ENCODE measurements at regions of chr15 and their contacts with region 1.

Region 1: GRCh38 chr15:74540761-74541493 is at the start of gene ARID3B:
- DNase-seq: peak; percentile 94
- H3K4me3 Mint-ChIP-seq: peak within 1 kb of the TSS; percentile 94
- H3K27ac Mint-ChIP-seq: peak within 1 kb of the TSS; percentile 98
- H3K4me1 Mint-ChIP-seq: peaks cover 46% of the 10 kb centered on the region
- H3K27me3 Mint-ChIP-seq: no peaks in the 10 kb centered on the region
- total RNA-seq, gene ARID3B: 35.6 and 41.2 TPM in 2 replicates

Region 2: DNA sequence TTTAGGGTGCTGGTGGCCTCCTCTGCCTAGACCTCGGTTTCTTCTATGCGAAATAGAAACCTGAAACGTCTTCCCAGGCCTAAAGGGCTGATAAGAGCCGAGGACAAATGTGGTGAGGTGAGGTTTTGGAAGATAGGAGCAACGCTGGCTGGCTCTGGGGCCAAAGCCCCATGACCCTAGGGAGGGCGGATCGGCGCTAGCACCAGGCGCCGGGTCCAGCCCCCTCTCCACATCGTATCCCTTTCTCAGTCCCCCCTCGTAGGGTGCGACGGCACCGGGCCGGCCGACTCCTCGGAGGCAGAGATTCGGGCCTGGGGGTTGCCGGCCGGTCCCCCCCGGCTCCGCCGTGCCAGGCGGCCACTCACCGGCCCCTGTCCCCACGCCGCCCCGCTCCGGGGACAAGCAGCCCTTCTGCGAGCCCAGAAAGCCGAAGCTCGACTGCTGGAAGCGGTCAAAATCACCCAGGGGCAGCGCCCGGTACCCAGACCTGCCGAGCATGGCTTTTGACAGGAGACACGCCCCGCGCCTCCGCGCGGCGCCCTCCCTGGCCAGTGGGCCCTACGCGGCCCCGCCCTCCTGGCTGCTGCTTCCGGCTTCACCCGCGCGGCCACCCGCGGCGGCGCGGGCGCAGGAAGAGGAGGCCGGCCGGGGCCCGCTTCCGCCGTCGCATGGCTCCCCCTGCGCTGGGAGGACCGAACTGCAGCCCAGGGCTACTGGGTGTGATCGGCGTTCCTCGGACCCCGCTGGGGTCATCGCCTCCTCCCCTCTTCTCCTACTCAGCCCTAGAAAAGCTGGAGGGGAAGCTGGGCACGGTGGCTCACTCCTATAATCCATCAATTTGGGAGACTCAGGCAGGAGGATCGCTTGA is 549.0 kb before region 1 on chr15 and contains the start of gene STOML1:
- intact Hi-C with region 1: loop called (anchors 2 kb)
- DNase-seq: peak; percentile 93
- H3K4me3 Mint-ChIP-seq: peak within 1 kb of the TSS; percentile 81
- H3K27ac Mint-ChIP-seq: peak within 1 kb of the TSS; percentile 85
- H3K4me1 Mint-ChIP-seq: peaks cover 35% of the 10 kb centered on the region
- H3K27me3 Mint-ChIP-seq: no peaks in the 10 kb centered on the region
- total RNA-seq, gene STOML1: 8.6 and 9.2 TPM in 2 replicates

Region 3: GRCh38 chr15:74396445-74397238 is 144.3 kb before region 1 on chr15:
- intact Hi-C with region 1: loop called (anchors 1 kb)
- DNase-seq: no peak
- H3K4me3 Mint-ChIP-seq: peak overlapping the region; percentile 59
- H3K27ac Mint-ChIP-seq: peak overlapping the region; percentile 98
- H3K4me1 Mint-ChIP-seq: peaks cover 82% of the 10 kb centered on the region
- H3K27me3 Mint-ChIP-seq: no peaks in the 10 kb centered on the region

Region 4: DNA sequence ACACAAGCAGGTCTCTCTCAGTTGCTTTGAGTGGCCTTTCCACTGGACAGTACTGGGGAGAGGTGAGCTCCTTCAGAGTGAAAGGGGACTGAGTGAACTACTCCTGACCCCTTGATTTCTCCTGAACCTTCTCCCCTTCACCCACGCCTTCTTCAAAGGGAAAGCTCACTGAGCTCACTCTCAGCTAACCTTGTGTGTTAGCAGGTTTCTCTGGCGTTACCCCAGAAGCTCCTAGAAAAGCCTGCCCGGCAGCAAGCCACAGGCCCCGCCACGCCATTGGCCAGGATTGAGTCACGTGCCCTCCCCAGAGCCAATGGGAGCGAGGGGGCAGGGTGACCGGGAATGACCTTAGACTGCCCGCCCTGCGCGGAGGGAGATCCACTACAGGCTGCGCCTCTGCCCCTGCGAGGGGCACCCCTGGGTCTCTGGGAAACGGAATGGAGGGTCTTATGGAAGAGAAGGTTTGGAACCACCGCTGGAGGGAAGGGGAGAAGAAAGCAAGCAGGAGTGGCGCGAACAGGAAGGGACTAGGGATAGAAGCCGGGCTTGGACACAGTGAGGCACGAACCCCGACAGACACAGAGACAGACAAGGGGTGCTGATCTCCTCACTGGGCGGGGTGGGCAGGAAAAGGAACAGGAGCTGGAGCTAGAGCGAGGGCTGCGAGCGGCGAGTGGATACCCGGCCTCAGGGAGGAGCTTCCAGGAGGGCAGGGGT is 57.4 kb after region 1 on chr15:
- intact Hi-C with region 1: loop called (anchors 1 kb)
- DNase-seq: peak; percentile 88
- H3K4me3 Mint-ChIP-seq: peak overlapping the region; percentile 98
- H3K27ac Mint-ChIP-seq: peak overlapping the region; percentile 98
- H3K4me1 Mint-ChIP-seq: peaks cover 23% of the 10 kb centered on the region
- H3K27me3 Mint-ChIP-seq: no peaks in the 10 kb centered on the region

Region 5: DNA sequence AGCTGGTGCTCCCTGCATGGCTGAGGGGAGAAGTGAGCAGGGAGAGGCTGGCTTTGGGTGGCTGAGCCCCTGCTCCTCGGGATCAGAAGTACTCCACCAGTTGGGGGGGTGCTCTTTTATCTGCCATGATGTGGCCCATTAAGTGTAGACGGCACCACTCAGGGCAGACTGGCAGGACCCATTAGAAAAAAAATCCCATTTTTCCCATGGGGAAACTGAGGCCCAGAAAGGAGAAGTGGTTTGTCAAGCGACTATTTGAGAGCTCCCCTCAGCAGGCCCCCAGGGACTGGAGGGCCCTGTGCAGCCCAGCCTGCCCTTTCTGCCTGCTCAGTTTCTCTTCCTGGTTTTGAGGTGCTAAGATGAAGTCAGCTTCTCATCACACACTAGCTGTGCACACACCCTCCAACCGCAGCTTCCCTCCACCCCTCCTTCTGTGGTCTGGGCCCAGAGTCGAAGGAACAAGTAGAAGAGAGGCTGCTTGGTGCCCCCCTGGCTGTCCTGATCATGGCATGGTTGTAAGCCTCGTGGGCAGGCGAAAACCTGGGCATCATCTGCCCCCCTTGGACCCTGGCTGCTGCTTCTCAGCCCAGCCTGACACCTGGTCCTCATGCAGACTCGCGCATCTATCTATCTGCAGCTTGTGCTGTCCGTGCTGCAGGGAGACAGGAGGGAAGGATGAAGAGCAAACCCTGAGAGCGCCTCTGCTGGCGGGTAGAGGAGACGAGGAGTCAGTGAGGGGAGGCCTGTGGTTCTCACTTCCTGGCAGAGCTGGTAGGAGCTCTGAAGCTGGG is 246.5 kb after region 1 on chr15:
- intact Hi-C with region 1: loop called (anchors 5 kb)
- DNase-seq: peak; percentile 91
- H3K4me3 Mint-ChIP-seq: peak overlapping the region; percentile 92
- H3K27ac Mint-ChIP-seq: peak overlapping the region; percentile 97
- H3K4me1 Mint-ChIP-seq: peaks cover 65% of the 10 kb centered on the region
- H3K27me3 Mint-ChIP-seq: no peaks in the 10 kb centered on the region

Measured in activated T-helper 2 cell treated with anti-CD3 and anti-CD28 coated beads, Interferon-gamma antibody, Interleukin-2, Interleukin-4, amounts not matched to agents 10 μg/mL and 5 μg/mL and 100 μg/mL, durations not matched to agents 14 hours and 24 hours and 36 hours (primary cell).